ENCODE measurements at regions of chr13 and their contacts with region 1.

Region 1: DNA sequence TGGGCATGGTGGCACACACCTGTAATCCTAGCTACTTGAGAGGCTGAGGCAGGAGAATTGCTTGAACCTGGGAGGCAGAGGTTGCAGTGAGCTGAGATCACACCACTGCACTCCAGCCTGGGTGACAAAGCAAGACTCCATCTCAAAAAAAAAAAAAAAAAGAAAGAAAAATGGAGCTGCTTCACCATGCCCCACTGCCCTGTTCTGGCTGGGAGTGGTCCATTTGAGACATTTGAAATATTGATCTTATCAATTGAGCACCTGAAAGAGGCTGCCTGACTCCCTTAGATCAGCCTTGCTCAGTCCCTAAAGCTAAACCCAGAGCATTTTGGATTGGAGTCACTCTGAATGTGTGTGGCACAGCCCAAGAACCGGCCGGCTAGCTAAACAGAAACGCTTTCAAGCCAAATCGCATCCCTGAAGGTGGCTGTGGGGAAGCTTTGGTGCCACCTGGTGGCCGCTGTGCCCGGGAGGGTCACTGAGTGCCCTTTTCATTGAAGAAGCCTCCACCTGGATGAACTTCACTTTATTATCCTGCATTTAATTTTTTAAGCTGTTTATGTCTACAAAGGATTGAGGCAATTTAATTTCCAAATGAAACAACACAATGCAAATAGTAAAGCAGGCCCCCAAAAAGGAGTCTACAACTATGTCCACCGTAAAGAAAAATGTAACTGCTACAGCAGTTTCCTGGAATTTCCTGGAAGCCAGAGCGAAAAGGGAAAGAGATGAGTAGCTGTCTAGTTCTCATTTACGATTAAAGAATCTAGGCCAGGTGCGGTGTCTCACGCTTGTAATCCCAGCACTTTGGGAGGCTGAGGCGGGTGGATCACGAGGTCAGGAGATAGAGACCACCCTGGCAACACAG is 53.1 kb upstream of the SERPINE3 start:
- DNase-seq: peak; percentile 33 to 73 (median 56)
- ATAC-seq: peak; percentile 52
- H3K4me3 ChIP-seq: no peak overlapping the region
- H3K4me3 Mint-ChIP-seq: no peak overlapping the region
- H3K27ac ChIP-seq: no peak overlapping the region
- H3K27ac Mint-ChIP-seq: no peak overlapping the region
- H3K4me1 ChIP-seq: peaks cover 3% of the 10 kb centered on the region
- H3K4me1 Mint-ChIP-seq: no peaks in the 10 kb centered on the region
- H3K27me3 ChIP-seq: no peaks in the 10 kb centered on the region
- H3K27me3 Mint-ChIP-seq: peaks cover 8% of the 10 kb centered on the region
- CTCF ChIP-seq: peak; percentile 87

Region 2: DNA sequence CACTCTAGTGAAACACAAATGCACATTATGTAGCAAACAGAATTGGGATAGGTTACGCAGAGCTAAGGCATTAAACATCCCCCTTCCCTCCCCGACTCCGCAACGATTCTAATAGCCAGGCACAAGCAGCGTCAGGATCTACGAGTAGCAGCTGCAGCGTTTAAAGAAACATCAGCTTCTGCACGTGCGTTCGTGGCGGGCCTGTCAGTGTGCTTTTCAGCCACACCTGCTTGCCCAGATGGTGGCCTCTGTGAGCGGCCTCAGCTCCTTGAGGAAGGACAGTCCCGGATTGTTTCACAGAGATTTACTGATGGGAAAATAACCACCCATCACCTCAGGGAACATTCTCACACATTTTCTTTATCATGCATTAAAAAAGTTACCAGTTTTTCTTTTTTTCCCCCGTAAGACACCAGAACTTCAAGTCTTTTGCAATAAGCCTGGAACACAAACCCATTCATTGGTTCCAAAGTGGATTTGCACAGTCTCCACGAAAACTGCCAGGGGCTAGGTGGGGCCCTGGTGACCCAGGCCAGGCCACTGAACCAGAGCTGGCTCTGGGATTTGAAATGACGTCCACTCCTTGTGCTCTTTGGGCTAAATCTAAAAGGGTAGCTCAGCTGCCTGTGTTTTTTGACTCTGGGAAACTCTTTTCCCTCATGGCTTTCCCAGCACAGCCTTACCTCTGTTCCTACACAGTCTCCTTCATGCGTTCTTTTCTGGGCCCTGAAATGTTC is 945.6 kb before region 1 on chr13:
- CTCF ChIA-PET with region 1: no interaction called
- POLR2A ChIA-PET with region 1: no interaction called
- intact Hi-C with region 1: no loop called
- DNase-seq: no peak
- ATAC-seq: no peak
- H3K4me3 ChIP-seq: no peak overlapping the region
- H3K4me3 Mint-ChIP-seq: no peak overlapping the region
- H3K27ac ChIP-seq: no peak overlapping the region
- H3K27ac Mint-ChIP-seq: no peak overlapping the region
- H3K4me1 ChIP-seq: peaks cover 4% of the 10 kb centered on the region
- H3K4me1 Mint-ChIP-seq: peaks cover 5% of the 10 kb centered on the region
- H3K27me3 ChIP-seq: no peaks in the 10 kb centered on the region
- H3K27me3 Mint-ChIP-seq: no peaks in the 10 kb centered on the region
- CTCF ChIP-seq: no peak

Region 3: GRCh38 chr13:51125498-51126226 is 160.7 kb before region 1 on chr13:
- CTCF ChIA-PET with region 1: interaction called, 8 read pairs
- POLR2A ChIA-PET with region 1: no interaction called
- intact Hi-C with region 1: loop called in 1 of 2 experiments (anchors 10 kb)
- DNase-seq: peak in 10 of 14 experiments; percentile 4 to 69 (median 20)
- ATAC-seq: peak; percentile 46
- H3K4me3 ChIP-seq: no peak overlapping the region
- H3K4me3 Mint-ChIP-seq: no peak overlapping the region
- H3K27ac ChIP-seq: no peak overlapping the region
- H3K27ac Mint-ChIP-seq: no peak overlapping the region
- H3K4me1 ChIP-seq: no peaks in the 10 kb centered on the region
- H3K4me1 Mint-ChIP-seq: peaks cover 4% of the 10 kb centered on the region
- H3K27me3 ChIP-seq: no peaks in the 10 kb centered on the region
- H3K27me3 Mint-ChIP-seq: peaks cover 15% of the 10 kb centered on the region
- CTCF ChIP-seq: peak; percentile 46

Region 4: DNA sequence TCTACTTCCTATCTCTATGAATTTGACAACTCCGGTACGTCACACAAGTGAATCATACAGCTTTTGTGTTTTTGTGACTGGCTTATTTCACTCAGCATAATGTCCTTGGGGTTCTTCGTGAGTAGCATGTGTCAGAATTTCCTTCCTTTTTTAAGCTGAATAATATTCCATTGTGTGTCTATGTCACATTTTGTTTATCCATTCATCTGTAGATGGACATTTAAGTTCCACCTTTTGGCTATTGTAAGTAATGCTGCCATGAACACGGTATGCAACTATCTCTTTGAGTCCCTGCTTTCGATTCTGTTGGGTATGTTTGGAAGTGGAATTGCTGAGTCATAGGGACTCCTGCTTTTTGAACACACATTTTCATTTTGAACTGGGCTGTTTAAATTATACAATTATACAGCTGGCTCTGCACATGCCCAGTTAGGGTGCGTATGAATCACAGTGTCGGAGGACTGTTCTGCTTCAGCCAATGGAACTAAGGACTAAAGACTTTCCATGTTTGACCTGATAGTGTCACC is 132.3 kb before region 1 on chr13:
- CTCF ChIA-PET with region 1: no interaction called
- POLR2A ChIA-PET with region 1: no interaction called
- intact Hi-C with region 1: loop called in 1 of 2 experiments (anchors 10 kb)
- DNase-seq: peak in 2 of 14 experiments; percentile 24 to 37
- ATAC-seq: no peak
- H3K4me3 ChIP-seq: no peak overlapping the region
- H3K4me3 Mint-ChIP-seq: no peak overlapping the region
- H3K27ac ChIP-seq: no peak overlapping the region
- H3K27ac Mint-ChIP-seq: no peak overlapping the region
- H3K4me1 ChIP-seq: no peaks in the 10 kb centered on the region
- H3K4me1 Mint-ChIP-seq: no peaks in the 10 kb centered on the region
- H3K27me3 ChIP-seq: peaks cover 0 to 3% of the 10 kb centered on the region in 2 experiments
- H3K27me3 Mint-ChIP-seq: peaks cover 19% of the 10 kb centered on the region
- CTCF ChIP-seq: no peak

Region 5: GRCh38 chr13:51269039-51269438 is 17.3 kb before region 1 on chr13:
- CTCF ChIA-PET with region 1: no interaction called
- POLR2A ChIA-PET with region 1: no interaction called
- intact Hi-C with region 1: no loop called
- DNase-seq: no peak
- ATAC-seq: no peak
- H3K4me3 ChIP-seq: no peak overlapping the region
- H3K4me3 Mint-ChIP-seq: no peak overlapping the region
- H3K27ac ChIP-seq: no peak overlapping the region
- H3K27ac Mint-ChIP-seq: no peak overlapping the region
- H3K4me1 ChIP-seq: no peaks in the 10 kb centered on the region
- H3K4me1 Mint-ChIP-seq: no peaks in the 10 kb centered on the region
- H3K27me3 ChIP-seq: no peaks in the 10 kb centered on the region
- H3K27me3 Mint-ChIP-seq: peaks cover 4% of the 10 kb centered on the region
- CTCF ChIP-seq: no peak

Region 6: DNA sequence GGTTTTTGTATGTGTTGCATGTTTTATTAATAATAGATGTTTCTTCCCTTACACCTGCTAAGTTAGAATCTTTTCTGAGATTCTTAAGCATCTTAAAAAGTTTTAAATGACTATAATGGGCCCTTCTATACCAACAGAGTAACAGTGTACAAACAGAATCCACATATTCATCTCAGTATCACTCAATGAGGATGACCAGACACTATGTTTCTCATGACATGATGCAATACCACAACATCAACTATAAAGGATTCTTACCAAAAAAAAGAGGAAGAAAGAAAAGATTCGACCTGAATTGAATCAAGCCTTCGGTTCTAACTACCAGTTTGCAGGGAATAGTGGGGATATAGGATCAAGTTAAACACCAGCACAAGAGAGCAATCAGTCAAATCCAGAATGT is 110.0 kb after region 1 on chr13:
- CTCF ChIA-PET with region 1: no interaction called
- POLR2A ChIA-PET with region 1: no interaction called
- intact Hi-C with region 1: no loop called
- DNase-seq: peak in 2 of 14 experiments; percentile 11 to 12
- ATAC-seq: no peak
- H3K4me3 ChIP-seq: no peak overlapping the region
- H3K4me3 Mint-ChIP-seq: no peak overlapping the region
- H3K27ac ChIP-seq: no peak overlapping the region
- H3K27ac Mint-ChIP-seq: peak overlapping the region; percentile 5
- H3K4me1 ChIP-seq: peaks cover 5% of the 10 kb centered on the region
- H3K4me1 Mint-ChIP-seq: peaks cover 65% of the 10 kb centered on the region
- H3K27me3 ChIP-seq: no peaks in the 10 kb centered on the region
- H3K27me3 Mint-ChIP-seq: no peaks in the 10 kb centered on the region
- CTCF ChIP-seq: no peak